ENCODE measurements at regions of chr7 and their contacts with region 1.

Region 1: GRCh38 chr7:74094224-74095101 is 10.9 kb downstream of the LIMK1 start:
- DNase-seq: peak; percentile 65
- H3K4me3 Mint-ChIP-seq: peak overlapping the region; percentile 81
- H3K27ac Mint-ChIP-seq: peak overlapping the region; percentile 96
- H3K4me1 Mint-ChIP-seq: peaks cover 15% of the 10 kb centered on the region
- H3K27me3 Mint-ChIP-seq: no peaks in the 10 kb centered on the region

Region 2: GRCh38 chr7:73560109-73560835 is 534.2 kb before region 1 on chr7:
- intact Hi-C with region 1: no loop called
- DNase-seq: no peak
- H3K4me3 Mint-ChIP-seq: no peak overlapping the region
- H3K27ac Mint-ChIP-seq: no peak overlapping the region
- H3K4me1 Mint-ChIP-seq: peaks cover 24% of the 10 kb centered on the region
- H3K27me3 Mint-ChIP-seq: no peaks in the 10 kb centered on the region

Region 3: DNA sequence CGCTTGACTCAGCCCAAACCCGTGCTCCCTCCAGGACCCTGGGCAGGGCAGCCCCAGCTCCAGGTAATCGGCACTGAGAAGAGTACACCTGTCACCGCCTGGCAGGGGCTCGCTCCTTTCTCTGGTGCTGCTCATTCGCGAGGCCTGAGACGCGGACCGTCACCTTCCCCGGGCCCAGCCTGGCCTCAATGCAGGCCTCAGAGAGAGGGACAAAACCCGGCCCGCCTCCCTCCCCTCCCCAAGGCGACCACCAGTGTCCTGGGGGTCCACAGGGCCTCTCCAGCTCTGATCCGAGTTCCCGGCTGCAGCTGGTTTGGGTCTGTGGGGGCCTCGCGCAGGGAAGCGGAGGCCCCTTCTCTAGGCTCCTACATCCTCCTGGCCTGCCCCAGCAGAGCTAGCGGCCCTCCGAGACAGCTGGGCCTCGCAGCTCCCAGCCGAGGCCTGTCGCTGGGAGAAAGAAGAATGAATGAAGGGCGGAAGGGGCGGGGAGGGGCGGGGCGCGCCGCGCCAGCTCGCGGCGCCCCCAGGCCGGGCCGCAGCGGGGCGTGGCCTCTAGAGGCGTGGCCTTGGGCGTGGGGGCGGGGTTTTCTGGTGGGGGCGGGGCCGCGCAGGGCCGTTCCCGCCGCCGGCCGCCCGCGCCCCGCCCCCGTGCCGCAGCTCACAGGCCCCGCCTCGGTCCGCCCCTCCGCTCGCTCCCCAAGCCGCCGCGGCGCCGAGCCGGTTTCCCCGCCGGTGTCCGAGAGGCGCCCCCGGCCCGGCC is 11.2 kb before region 1 on chr7 and contains the start of gene LIMK1:
- intact Hi-C with region 1: loop called (anchors 1 kb)
- DNase-seq: peak; percentile 80
- H3K4me3 Mint-ChIP-seq: peak within 1 kb of the TSS; percentile 87
- H3K27ac Mint-ChIP-seq: peak within 1 kb of the TSS; percentile 84
- H3K4me1 Mint-ChIP-seq: peaks cover 9% of the 10 kb centered on the region
- H3K27me3 Mint-ChIP-seq: peaks cover 6% of the 10 kb centered on the region
- total RNA-seq, gene LIMK1: 29.6 and 34.4 TPM in 2 replicates

Region 4: DNA sequence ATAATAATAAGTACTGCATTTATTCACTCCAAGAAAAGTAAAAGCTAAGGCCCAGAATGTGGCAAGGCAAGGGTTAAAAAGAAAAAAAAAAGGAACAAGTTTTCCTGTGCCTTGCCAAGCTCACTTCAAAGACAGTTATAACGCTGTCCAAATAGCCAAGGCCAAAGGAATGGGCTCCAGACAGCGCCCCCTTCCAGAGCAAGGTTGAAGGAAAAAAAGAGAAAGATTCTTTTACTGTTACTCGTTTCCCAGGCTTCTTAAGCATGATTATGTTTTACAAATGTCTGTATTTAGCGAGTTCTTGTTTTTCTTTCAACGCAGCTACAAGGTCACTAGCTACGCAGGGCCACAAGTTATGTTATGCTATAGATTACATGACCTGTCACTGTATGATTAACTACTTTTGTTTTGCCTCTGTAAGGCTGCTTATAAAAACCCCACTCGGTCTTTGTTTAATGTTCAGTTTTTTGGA is 70.6 kb after region 1 on chr7:
- intact Hi-C with region 1: no loop called
- DNase-seq: no peak
- H3K4me3 Mint-ChIP-seq: no peak overlapping the region
- H3K27ac Mint-ChIP-seq: no peak overlapping the region
- H3K4me1 Mint-ChIP-seq: no peaks in the 10 kb centered on the region
- H3K27me3 Mint-ChIP-seq: no peaks in the 10 kb centered on the region

Region 5: DNA sequence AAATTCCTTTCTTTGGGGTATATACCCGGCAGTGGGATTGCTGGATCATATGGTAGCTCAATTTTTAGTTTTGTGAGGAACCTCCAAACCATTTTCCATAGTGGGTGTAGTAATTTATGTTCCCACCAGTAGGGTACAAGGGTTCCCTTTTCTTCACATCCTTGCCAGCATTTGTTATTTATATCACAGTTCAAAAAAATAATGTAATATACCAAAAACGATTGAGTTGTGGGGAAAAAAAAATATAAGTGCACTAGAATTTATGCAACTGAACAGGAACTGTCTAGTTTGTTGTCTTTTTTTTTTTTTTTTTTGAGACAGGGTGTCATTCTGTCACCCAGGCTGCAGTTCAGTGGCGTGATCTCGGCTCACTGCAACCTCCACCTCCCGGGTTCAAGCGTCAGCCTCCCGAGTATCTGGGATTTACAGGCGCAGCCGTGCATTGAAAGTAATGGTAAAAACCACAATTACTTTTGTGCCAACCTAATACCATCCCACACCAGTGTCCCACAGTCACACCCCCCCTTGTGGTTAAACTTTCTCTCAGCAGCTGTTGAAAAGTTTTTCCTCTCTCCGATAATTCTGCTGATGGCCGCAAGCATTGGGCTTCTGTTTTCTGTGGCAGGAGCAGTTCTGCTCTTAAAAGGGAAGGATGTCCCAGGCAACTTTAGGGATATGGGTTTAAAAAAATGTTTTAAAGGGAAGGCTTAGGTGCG is 108.5 kb after region 1 on chr7:
- intact Hi-C with region 1: no loop called
- DNase-seq: no peak
- H3K4me3 Mint-ChIP-seq: no peak overlapping the region
- H3K27ac Mint-ChIP-seq: no peak overlapping the region
- H3K4me1 Mint-ChIP-seq: peaks cover 11% of the 10 kb centered on the region
- H3K27me3 Mint-ChIP-seq: peaks cover 3% of the 10 kb centered on the region